OCI-LY7 (cell line): ENCODE measurements at regions of chr7 and their contacts with region 1.

Region 1: GRCh38 chr7:92343719-92344118 is 97.9 kb downstream of the ANKIB1 start:
- DNase-seq: no peak
- H3K4me3 ChIP-seq: no peak overlapping the region
- H3K27ac ChIP-seq: no peak overlapping the region
- H3K4me1 ChIP-seq: no peaks in the 10 kb centered on the region
- CTCF ChIP-seq: no peak

Region 2: GRCh38 chr7:92354214-92354613 is 10.5 kb after region 1 on chr7:
- CTCF ChIA-PET with region 1: no interaction called
- POLR2A ChIA-PET with region 1: interaction called, 11 read pairs
- intact Hi-C with region 1: no loop called
- DNase-seq: no peak
- H3K4me3 ChIP-seq: no peak overlapping the region
- H3K27ac ChIP-seq: no peak overlapping the region
- H3K4me1 ChIP-seq: no peaks in the 10 kb centered on the region
- CTCF ChIP-seq: no peak